GM18951 (cell line): ENCODE measurements at regions of chr1 and their contacts with region 1.

Region 1: GRCh38 chr1:96845464-96845863 is 123.9 kb downstream of the PTBP2 start:
- POLR2A ChIP-seq: no peak

Region 2: GRCh38 chr1:96236156-96236739 is 609.2 kb before region 1 on chr1:
- in situ Hi-C with region 1: loop called (anchors 25 kb)
- POLR2A ChIP-seq: no peak